ENCODE measurements at regions of chr4 and their contacts with region 1.

Region 1: GRCh38 chr4:39664828-39665731 is 26.4 kb upstream of the SMIM14 start:
- DNase-seq: no peak
- H3K4me3 ChIP-seq: no peak overlapping the region
- H3K27ac ChIP-seq: no peak overlapping the region
- H3K4me1 ChIP-seq: no peaks in the 10 kb centered on the region
- H3K27me3 ChIP-seq: no peaks in the 10 kb centered on the region
- CTCF ChIP-seq: no peak

Region 2: GRCh38 chr4:39756159-39756558 is 91.1 kb after region 1 on chr4:
- CTCF ChIA-PET with region 1: no interaction called
- dilution Hi-C with region 1: loop called (anchors 5 kb)
- in situ Hi-C with region 1: no loop called
- intact Hi-C with region 1: no loop called
- DNase-seq: no peak
- H3K4me3 ChIP-seq: no peak overlapping the region
- H3K27ac ChIP-seq: no peak overlapping the region
- H3K4me1 ChIP-seq: no peaks in the 10 kb centered on the region
- H3K27me3 ChIP-seq: no peaks in the 10 kb centered on the region
- CTCF ChIP-seq: no peak

Region 3: DNA sequence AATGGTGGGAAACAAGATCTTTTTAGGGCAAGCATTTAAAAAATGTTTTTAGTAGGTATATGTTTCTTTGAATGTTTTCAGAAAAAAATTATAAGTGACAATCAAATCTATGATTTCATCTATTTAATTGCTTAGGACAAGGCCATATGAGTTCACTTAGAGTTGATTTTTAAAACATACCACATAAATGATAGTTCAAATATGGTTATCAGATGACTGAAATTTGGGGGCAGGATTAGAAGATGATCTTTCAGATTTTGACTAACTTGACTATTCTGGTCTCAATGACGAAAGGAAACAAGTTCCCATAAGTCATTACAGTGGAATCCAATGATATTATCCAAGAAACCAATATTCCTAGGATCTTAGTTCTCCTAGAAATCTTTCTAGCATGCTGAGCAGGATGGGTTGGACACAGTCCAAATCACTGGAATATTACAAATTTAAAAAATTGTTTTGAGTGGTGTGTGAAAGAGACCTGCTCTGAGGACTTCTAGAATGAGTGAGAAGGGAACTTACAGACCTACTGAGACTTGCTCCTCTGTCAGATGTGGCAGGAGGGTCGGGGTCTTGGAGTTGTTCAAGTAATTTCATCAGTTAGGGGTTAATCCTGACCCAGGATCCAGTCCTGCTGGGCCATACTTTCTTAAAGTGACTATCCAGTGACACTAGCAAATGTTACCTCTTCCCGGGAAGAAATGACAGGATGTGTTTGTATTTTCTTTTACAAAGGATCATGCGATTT is 551.7 kb after region 1 on chr4:
- CTCF ChIA-PET with region 1: no interaction called
- dilution Hi-C with region 1: no loop called
- in situ Hi-C with region 1: no loop called
- intact Hi-C with region 1: no loop called
- DNase-seq: no peak
- H3K4me3 ChIP-seq: no peak overlapping the region
- H3K27ac ChIP-seq: no peak overlapping the region
- H3K4me1 ChIP-seq: no peaks in the 10 kb centered on the region
- H3K27me3 ChIP-seq: no peaks in the 10 kb centered on the region
- CTCF ChIP-seq: no peak